CD4-positive, alpha-beta T cell (primary cell): ENCODE measurements at regions of chr16 and their contacts with region 1.

Region 1: GRCh38 chr16:11576427-11577289 is 10.1 kb downstream of the LITAF start:
- DNase-seq: peak in 3 of 14 experiments; percentile 48 to 58 (median 54)
- ATAC-seq: no peak
- H3K4me3 ChIP-seq: no peak overlapping the region
- H3K4me3 Mint-ChIP-seq: peak overlapping the region; percentile 62
- H3K27ac ChIP-seq: no peak overlapping the region
- H3K27ac Mint-ChIP-seq: peak overlapping the region; percentile 88
- H3K4me1 ChIP-seq: peaks cover 87% of the 10 kb centered on the region
- H3K4me1 Mint-ChIP-seq: peaks cover 85% of the 10 kb centered on the region
- H3K27me3 ChIP-seq: no peaks in the 10 kb centered on the region
- H3K27me3 Mint-ChIP-seq: no peaks in the 10 kb centered on the region
- CTCF ChIP-seq: no peak

Region 2: GRCh38 chr16:11560701-11561449 is 15.8 kb before region 1 on chr16:
- CTCF ChIA-PET with region 1: no interaction called
- POLR2A ChIA-PET with region 1: interaction called, 26 read pairs
- intact Hi-C with region 1: loop called in 1 of 2 experiments (anchors 1 kb)
- DNase-seq: peak; percentile 58 to 93 (median 67)
- ATAC-seq: peak; percentile 86
- H3K4me3 ChIP-seq: peak overlapping the region; percentile 53
- H3K4me3 Mint-ChIP-seq: peak overlapping the region; percentile 49
- H3K27ac ChIP-seq: peak overlapping the region; percentile 86 to 87
- H3K27ac Mint-ChIP-seq: peak overlapping the region; percentile 94
- H3K4me1 ChIP-seq: peaks cover 90% of the 10 kb centered on the region
- H3K4me1 Mint-ChIP-seq: peaks cover 83% of the 10 kb centered on the region
- H3K27me3 ChIP-seq: no peaks in the 10 kb centered on the region
- H3K27me3 Mint-ChIP-seq: no peaks in the 10 kb centered on the region
- CTCF ChIP-seq: no peak